Heart right ventricle (tissue), 16 donors: ENCODE measurements at regions of chr18 and their contacts with region 1.

Region 1: DNA sequence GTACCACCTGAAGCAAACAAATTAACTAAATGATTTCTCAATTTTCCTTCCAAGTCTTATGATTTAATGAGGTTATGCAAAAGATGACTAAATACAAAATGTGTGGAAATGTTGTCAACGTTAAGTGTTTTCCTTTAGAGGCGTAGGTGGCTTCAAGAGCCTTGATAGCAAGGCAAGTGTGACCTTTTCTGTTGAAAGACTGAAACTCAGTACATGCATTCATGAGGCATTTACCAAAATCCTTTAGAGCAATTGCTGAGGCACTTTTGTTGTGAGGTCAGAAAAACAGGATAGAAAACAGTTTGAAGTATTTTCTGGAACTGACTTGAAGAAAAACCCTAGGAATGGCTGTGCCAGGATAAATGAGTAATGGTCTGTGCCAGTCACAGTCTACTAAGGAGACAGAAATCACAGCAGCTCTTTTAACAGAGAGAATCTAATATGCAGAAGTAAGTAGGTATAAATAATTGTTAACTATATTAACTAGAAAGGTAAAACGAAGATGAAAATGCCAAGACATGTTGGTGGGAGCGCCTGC is 326.5 kb upstream of the CDH20 start:
- DNase-seq: no peak
- ATAC-seq: no peak
- H3K4me3 ChIP-seq: no peak overlapping the region
- H3K27ac ChIP-seq: no peak overlapping the region
- H3K4me1 ChIP-seq: no peaks in the 10 kb centered on the region
- H3K27me3 ChIP-seq: no peaks in the 10 kb centered on the region
- CTCF ChIP-seq: no peak

Region 2: GRCh38 chr18:60966876-60967275 is 39.9 kb before region 1 on chr18:
- intact Hi-C with region 1: no loop called
- DNase-seq: no peak
- ATAC-seq: no peak
- H3K4me3 ChIP-seq: no peak overlapping the region
- H3K27ac ChIP-seq: no peak overlapping the region
- H3K4me1 ChIP-seq: peaks cover 0 to 9% (median 3%) of the 10 kb centered on the region in 9 donors
- H3K27me3 ChIP-seq: no peaks in the 10 kb centered on the region
- CTCF ChIP-seq: no peak

Region 3: GRCh38 chr18:61019338-61020301 is 12.9 kb after region 1 on chr18:
- intact Hi-C with region 1: loop called in 1 of 10 experiments (anchors 1 kb)
- DNase-seq: no peak
- ATAC-seq: no peak
- H3K4me3 ChIP-seq: no peak overlapping the region
- H3K27ac ChIP-seq: no peak overlapping the region
- H3K4me1 ChIP-seq: no peaks in the 10 kb centered on the region
- H3K27me3 ChIP-seq: no peaks in the 10 kb centered on the region
- CTCF ChIP-seq: no peak

Region 4: GRCh38 chr18:61064911-61065310 is 58.2 kb after region 1 on chr18:
- intact Hi-C with region 1: no loop called
- DNase-seq: no peak
- ATAC-seq: no peak
- H3K4me3 ChIP-seq: no peak overlapping the region
- H3K27ac ChIP-seq: no peak overlapping the region
- H3K4me1 ChIP-seq: no peaks in the 10 kb centered on the region
- H3K27me3 ChIP-seq: no peaks in the 10 kb centered on the region
- CTCF ChIP-seq: no peak